PC-9 (cell line): ENCODE measurements at regions of chr1 and their contacts with region 1.

Region 1: GRCh38 chr1:159161001-159161718 is 10.3 kb upstream of the CADM3 start:
- DNase-seq: peak; percentile 41 to 60
- H3K4me3 ChIP-seq: no peak overlapping the region
- H3K27ac ChIP-seq: no peak overlapping the region
- H3K4me1 ChIP-seq: no peaks in the 10 kb centered on the region
- H3K27me3 ChIP-seq: peaks cover 12% of the 10 kb centered on the region
- CTCF ChIP-seq: peak; percentile 90

Region 2: GRCh38 chr1:159113596-159114433 is 47.3 kb before region 1 on chr1:
- CTCF ChIA-PET with region 1: no interaction called
- POLR2A ChIA-PET with region 1: no interaction called
- intact Hi-C with region 1: no loop called
- DNase-seq: no peak
- H3K4me3 ChIP-seq: no peak overlapping the region
- H3K27ac ChIP-seq: no peak overlapping the region
- H3K4me1 ChIP-seq: no peaks in the 10 kb centered on the region
- H3K27me3 ChIP-seq: no peaks in the 10 kb centered on the region
- CTCF ChIP-seq: no peak

Region 3: DNA sequence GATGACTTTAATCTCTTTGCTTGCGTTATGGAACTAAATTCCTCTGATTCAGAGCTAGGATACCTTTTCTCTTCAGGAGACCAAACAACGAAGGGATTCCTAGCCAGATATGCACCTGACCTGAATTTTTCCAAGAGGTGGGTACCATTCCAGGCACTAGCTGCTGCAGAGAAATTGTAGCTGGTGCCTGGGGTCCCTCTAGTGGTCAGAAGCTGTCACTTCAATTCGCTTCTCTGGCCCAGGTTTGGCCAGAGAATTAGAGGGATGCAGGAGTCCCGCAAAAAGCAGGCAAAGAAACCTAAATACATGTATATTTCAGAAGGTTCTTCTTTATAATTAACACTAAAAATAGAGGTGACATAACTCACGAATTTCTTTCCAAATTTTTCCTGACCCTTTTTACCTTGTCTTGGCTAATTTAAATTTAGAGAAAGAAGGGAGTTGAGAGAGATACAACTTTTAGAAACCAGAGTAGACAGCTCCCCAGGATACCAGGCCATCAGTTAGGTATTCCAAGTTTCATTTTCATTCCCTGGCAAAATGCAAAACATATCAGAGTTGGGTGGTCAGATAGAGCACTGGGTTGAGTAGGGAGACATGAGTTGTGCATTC is 53.1 kb after region 1 on chr1:
- CTCF ChIA-PET with region 1: interaction called, 6 read pairs
- POLR2A ChIA-PET with region 1: no interaction called
- intact Hi-C with region 1: loop called (anchors 1 kb)
- DNase-seq: peak in 1 of 2 experiments; percentile 31
- H3K4me3 ChIP-seq: no peak overlapping the region
- H3K27ac ChIP-seq: no peak overlapping the region
- H3K4me1 ChIP-seq: no peaks in the 10 kb centered on the region
- H3K27me3 ChIP-seq: peaks cover 47% of the 10 kb centered on the region
- CTCF ChIP-seq: peak; percentile 92

Region 4: DNA sequence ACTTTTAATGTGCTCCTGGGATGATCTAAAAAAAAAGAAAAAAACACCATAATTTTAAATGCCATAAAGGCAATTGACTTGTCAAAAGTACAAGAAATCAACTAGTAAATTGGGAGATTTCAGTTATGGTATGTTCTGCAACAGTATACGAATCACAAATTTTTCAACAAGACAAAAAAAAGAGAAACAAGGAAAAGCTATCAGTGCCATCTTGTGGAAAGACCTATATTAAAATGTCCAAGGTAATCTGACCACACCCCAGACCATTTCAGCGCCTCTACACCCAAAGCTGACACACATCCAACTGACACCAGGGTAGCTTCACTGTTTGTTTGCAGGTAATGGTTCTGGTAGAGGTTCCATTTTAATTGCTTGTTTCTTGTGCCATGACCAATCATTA is 614.6 kb after region 1 on chr1:
- CTCF ChIA-PET with region 1: no interaction called
- POLR2A ChIA-PET with region 1: no interaction called
- intact Hi-C with region 1: loop called (anchors 1 kb)
- DNase-seq: no peak
- H3K4me3 ChIP-seq: no peak overlapping the region
- H3K27ac ChIP-seq: no peak overlapping the region
- H3K4me1 ChIP-seq: peaks cover 4% of the 10 kb centered on the region; the same call in 1 of the 2 replicates
- H3K27me3 ChIP-seq: peaks cover 2% of the 10 kb centered on the region; the same call in 1 of the 2 replicates
- CTCF ChIP-seq: 0 out of 2 replicates have a peak, but pooled peaks have one; percentile 12

Region 5: GRCh38 chr1:159798893-159799292 is 637.7 kb after region 1 on chr1:
- CTCF ChIA-PET with region 1: no interaction called
- POLR2A ChIA-PET with region 1: no interaction called
- intact Hi-C with region 1: loop called (anchors 2 kb)
- DNase-seq: peak; percentile 61 to 70
- H3K4me3 ChIP-seq: no peak overlapping the region
- H3K27ac ChIP-seq: no peak overlapping the region
- H3K4me1 ChIP-seq: no peaks in the 10 kb centered on the region
- H3K27me3 ChIP-seq: peaks cover 19% of the 10 kb centered on the region
- CTCF ChIP-seq: peak; percentile 74